GM12878 (cell line): ENCODE measurements at regions of chr14 and their contacts with region 1.

Region 1: GRCh38 chr14:89040460-89041259 is 216.2 kb downstream of the TTC8 start:
- DNase-seq: peak; percentile 21
- ATAC-seq: peak; percentile 95
- H3K4me3 ChIP-seq: peak overlapping the region; percentile 59; the same call in 1 of the 2 replicates
- H3K27ac ChIP-seq: no peak overlapping the region
- H3K4me1 ChIP-seq: peaks cover 6% of the 10 kb centered on the region
- H3K27me3 ChIP-seq: no peaks in the 10 kb centered on the region
- CTCF ChIP-seq: peak; percentile 88 to 96 (median 95); a peak in 5 of 6 replicates
- EP300 ChIP-seq: no peak
- POLR2A ChIP-seq: no peak
- RAD21 ChIP-seq: peak; percentile 97

Region 2: DNA sequence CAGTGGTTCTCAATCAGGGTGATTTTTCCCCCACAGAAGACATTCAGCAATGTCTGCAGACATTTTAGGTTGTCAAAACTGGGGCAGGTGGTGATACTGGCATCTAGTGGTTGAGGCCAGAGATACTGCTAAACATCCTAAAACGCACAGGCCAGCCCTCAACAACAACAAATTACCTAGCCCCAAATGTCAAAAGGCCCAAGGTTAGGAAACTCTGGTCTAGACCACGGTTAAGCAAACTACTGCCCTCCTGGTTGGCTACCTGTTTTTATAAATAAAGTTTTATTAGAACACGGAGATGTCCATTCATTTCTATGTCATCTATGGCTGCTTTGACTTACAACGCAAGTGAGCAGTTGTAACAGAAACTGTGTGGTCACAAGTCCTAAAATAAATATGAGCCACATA is 727.2 kb after region 1 on chr14:
- CTCF ChIA-PET with region 1: interaction called, 12 read pairs
- POLR2A ChIA-PET with region 1: no interaction called
- RAD21 ChIA-PET with region 1: no interaction called
- SMC1A ChIA-PET with region 1: interaction called, 11 read pairs
- in situ Hi-C with region 1: loop called (anchors 25 kb)
- intact Hi-C with region 1: loop called (anchors 2 kb)
- DNase-seq: peak; percentile 65
- ATAC-seq: peak; percentile 94
- H3K4me3 ChIP-seq: no peak overlapping the region
- H3K27ac ChIP-seq: peak overlapping the region; percentile 56
- H3K4me1 ChIP-seq: peaks cover 22% of the 10 kb centered on the region
- H3K27me3 ChIP-seq: no peaks in the 10 kb centered on the region
- CTCF ChIP-seq: peak; percentile 75 to 87 (median 81)
- EP300 ChIP-seq: 0 out of 4 replicates have a peak, but pooled peaks of 1 of the 2 experiments have one; percentile 29
- POLR2A ChIP-seq: no peak
- RAD21 ChIP-seq: peak; percentile 95

Region 3: GRCh38 chr14:89899917-89900663 is 859.4 kb after region 1 on chr14:
- CTCF ChIA-PET with region 1: interaction called, 5 read pairs
- POLR2A ChIA-PET with region 1: no interaction called
- RAD21 ChIA-PET with region 1: no interaction called
- SMC1A ChIA-PET with region 1: no interaction called
- in situ Hi-C with region 1: no loop called
- intact Hi-C with region 1: loop called (anchors 1 kb)
- DNase-seq: no peak
- ATAC-seq: peak; percentile 63
- H3K4me3 ChIP-seq: no peak overlapping the region
- H3K27ac ChIP-seq: no peak overlapping the region
- H3K4me1 ChIP-seq: no peaks in the 10 kb centered on the region
- H3K27me3 ChIP-seq: no peaks in the 10 kb centered on the region
- CTCF ChIP-seq: peak; percentile 44 to 56 (median 45); a peak in 5 of 6 replicates
- EP300 ChIP-seq: no peak
- POLR2A ChIP-seq: no peak
- RAD21 ChIP-seq: peak; percentile 77

Region 4: GRCh38 chr14:89915114-89915878 is 874.6 kb after region 1 on chr14:
- CTCF ChIA-PET with region 1: interaction called, 8 read pairs
- POLR2A ChIA-PET with region 1: no interaction called
- RAD21 ChIA-PET with region 1: interaction called, 4 read pairs
- SMC1A ChIA-PET with region 1: interaction called, 5 read pairs
- in situ Hi-C with region 1: loop called (anchors 5 kb)
- intact Hi-C with region 1: loop called (anchors 1 kb)
- DNase-seq: peak; percentile 25
- ATAC-seq: peak; percentile 75
- H3K4me3 ChIP-seq: no peak overlapping the region
- H3K27ac ChIP-seq: no peak overlapping the region
- H3K4me1 ChIP-seq: no peaks in the 10 kb centered on the region
- H3K27me3 ChIP-seq: no peaks in the 10 kb centered on the region
- CTCF ChIP-seq: peak; percentile 85 to 92 (median 87)
- EP300 ChIP-seq: no peak
- POLR2A ChIP-seq: no peak
- RAD21 ChIP-seq: peak; percentile 96